ENCODE measurements at regions of chr7 and their contacts with region 1.

Region 1: GRCh38 chr7:95476904-95477594 is 8.7 kb upstream of the ASB4 start:
- DNase-seq: peak; percentile 69
- ATAC-seq: no peak
- H3K4me3 Mint-ChIP-seq: no peak overlapping the region
- H3K27ac Mint-ChIP-seq: no peak overlapping the region
- H3K4me1 Mint-ChIP-seq: no peaks in the 10 kb centered on the region
- H3K27me3 Mint-ChIP-seq: peaks cover 5% of the 10 kb centered on the region

Region 2: DNA sequence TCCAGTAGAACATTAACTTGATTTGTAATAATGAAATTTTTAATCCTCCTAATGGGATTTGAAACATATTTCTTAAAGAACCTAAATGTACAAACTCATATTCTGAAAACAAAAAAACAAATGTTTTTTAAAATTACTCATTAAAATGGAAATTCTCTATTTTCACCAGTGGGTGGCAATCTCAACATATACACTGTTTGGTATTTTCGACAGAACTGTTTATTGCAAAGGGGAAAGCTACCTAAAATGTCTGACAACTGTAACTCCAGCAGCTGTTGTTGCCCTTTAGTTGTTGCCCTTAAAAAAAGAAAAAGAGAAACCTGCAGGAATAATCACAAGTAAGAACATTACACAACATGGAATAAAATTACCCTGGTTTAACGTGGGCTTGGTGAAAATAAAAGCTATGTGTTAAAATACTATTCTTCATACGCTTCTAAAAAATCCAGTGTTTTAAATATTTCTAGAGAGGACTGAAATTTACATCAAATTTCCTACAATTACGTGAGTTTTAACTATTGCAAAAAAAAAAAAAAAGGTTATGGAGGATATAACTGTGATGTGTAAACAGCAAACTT is 1027.8 kb before region 1 on chr7:
- CTCF ChIA-PET with region 1: interaction called, 27 read pairs
- POLR2A ChIA-PET with region 1: no interaction called
- DNase-seq: no peak
- ATAC-seq: no peak
- H3K4me3 Mint-ChIP-seq: no peak overlapping the region
- H3K27ac Mint-ChIP-seq: no peak overlapping the region
- H3K4me1 Mint-ChIP-seq: no peaks in the 10 kb centered on the region
- H3K27me3 Mint-ChIP-seq: peaks cover 13% of the 10 kb centered on the region

Region 3: DNA sequence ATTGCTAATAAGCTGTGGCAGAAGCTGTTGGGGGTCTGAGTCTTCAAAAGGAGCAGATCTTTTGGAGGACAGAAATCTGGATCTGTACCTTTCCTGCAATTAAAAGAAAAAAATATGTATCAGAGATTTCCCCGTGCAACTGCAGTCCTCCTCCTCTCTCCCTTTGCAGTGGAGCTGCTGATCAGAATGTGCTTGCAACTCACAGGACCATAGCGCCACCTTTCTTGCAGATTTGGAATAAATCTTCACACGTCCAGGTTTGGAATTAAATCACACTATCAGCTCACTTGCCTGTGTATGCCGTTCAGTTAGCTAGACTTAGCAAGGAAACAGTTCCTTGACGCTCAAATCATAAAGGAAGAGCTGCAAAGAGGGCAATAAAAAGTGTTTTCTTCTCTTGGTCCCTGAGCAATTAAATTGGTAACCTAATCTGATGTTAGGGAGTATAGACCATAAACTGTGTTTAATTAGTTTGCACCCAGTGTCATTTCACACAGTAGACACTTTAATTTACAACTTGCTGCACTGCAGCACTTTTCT is 230.1 kb before region 1 on chr7:
- CTCF ChIA-PET with region 1: interaction called, 13 read pairs
- POLR2A ChIA-PET with region 1: no interaction called
- DNase-seq: peak; percentile 33
- ATAC-seq: no peak
- H3K4me3 Mint-ChIP-seq: no peak overlapping the region
- H3K27ac Mint-ChIP-seq: no peak overlapping the region
- H3K4me1 Mint-ChIP-seq: no peaks in the 10 kb centered on the region
- H3K27me3 Mint-ChIP-seq: peaks cover 6% of the 10 kb centered on the region

Region 4: GRCh38 chr7:95446618-95447017 is 30.4 kb before region 1 on chr7:
- CTCF ChIA-PET with region 1: no interaction called
- POLR2A ChIA-PET with region 1: no interaction called
- DNase-seq: no peak
- ATAC-seq: no peak
- H3K4me3 Mint-ChIP-seq: no peak overlapping the region
- H3K27ac Mint-ChIP-seq: no peak overlapping the region
- H3K4me1 Mint-ChIP-seq: no peaks in the 10 kb centered on the region
- H3K27me3 Mint-ChIP-seq: peaks cover 6% of the 10 kb centered on the region

Region 5: DNA sequence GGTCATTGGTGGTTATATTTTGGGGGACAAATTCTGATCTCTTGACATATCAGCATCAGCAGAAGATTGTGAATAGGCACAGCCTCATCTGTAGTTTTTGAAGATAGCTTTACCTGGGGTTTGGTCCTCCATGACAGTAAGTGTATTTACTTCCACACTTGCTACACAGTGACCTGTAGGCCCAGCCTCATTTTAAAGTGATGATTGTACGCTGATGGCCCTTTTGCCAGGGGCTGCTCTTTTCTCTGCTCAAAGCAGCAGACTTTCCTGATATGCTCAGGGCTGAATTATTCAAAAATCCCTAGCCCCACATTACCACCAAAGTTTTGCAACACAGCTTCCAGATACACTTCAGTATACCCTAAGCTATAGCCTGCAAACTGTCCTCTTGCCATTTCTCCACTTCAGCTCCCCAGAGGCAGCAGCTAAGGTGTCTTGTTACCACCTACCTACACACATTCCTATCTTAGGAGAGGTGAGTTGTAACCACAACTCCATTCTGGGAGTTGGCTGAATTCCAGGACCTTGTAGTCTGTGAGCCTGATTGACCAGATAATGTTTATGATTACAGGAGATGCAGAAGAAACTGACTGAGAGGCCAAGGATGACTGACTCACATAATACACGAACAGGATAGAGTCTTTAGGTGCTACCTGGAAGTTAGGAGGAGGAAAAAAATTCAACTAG is 14.7 kb after region 1 on chr7:
- CTCF ChIA-PET with region 1: interaction called, 111 read pairs
- POLR2A ChIA-PET with region 1: no interaction called
- DNase-seq: no peak
- ATAC-seq: no peak
- H3K4me3 Mint-ChIP-seq: no peak overlapping the region
- H3K27ac Mint-ChIP-seq: no peak overlapping the region
- H3K4me1 Mint-ChIP-seq: no peaks in the 10 kb centered on the region
- H3K27me3 Mint-ChIP-seq: peaks cover 13% of the 10 kb centered on the region

Region 6: DNA sequence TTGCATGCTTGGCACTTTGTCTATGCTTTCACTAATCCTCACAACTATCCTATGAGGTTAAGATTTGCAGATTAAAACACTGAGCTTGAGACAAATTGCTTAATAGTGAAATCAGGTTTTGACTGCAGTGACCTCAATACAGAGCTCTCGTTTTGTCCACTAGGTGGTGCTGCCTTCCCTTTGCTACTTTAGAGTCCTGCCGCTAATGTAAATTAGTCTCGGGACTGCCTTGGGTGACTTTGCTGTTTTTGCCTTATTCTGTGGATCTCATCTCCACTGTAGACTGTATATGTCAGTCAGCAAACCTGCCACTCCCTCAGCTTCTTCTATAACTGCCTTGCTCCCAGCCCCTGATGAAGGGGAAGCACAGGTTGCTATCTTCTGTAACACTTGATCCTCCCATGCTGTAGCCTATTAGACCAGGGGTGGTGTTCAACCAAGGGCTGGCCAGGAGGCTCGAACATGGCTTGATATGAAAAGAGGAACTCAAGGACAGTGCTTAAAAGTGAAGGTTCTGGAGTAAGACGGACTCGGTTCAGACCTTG is 34.7 kb after region 1 on chr7:
- CTCF ChIA-PET with region 1: interaction called, 59 read pairs
- POLR2A ChIA-PET with region 1: no interaction called
- DNase-seq: peak; percentile 73
- ATAC-seq: peak; percentile 83
- H3K4me3 Mint-ChIP-seq: no peak overlapping the region
- H3K27ac Mint-ChIP-seq: no peak overlapping the region
- H3K4me1 Mint-ChIP-seq: peaks cover 2% of the 10 kb centered on the region
- H3K27me3 Mint-ChIP-seq: peaks cover 21% of the 10 kb centered on the region

Measured in activated CD8-positive, alpha-beta T cell treated with anti-CD3 and anti-CD28 coated beads, Interleukin-2, amount 10 ng/mL, durations not matched to agents 7 days and 5 days (primary cell).